ENCODE measurements at regions of chr1 and their contacts with region 1.

Region 1: DNA sequence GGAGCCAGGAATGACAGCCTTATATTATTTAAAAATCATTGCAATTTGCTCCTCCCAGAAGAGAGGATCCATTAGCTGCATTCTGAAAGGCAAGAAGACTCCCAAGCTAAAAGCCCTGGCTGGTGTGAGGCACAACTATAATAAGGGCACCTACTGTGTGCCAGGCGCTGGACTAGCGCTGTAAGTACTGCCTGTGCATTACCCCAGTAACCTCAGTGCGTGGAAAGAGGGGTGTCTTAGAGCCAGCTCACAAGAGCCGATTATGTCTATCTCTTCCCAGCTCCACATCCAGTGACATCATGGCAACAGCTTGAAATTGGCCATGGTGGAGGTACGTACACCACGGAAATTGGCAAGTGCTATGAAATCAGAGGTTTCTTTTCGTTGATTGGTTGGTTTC is 141.7 kb upstream of the IRF2BP2 start:
- DNase-seq: no peak
- ATAC-seq: no peak
- H3K4me3 Mint-ChIP-seq: no peak overlapping the region
- H3K27ac Mint-ChIP-seq: no peak overlapping the region
- H3K4me1 Mint-ChIP-seq: peaks cover 1% of the 10 kb centered on the region
- H3K27me3 Mint-ChIP-seq: no peaks in the 10 kb centered on the region

Region 2: GRCh38 chr1:234699795-234700665 is 51.6 kb before region 1 on chr1:
- CTCF ChIA-PET with region 1: no interaction called
- POLR2A ChIA-PET with region 1: no interaction called
- intact Hi-C with region 1: no loop called
- DNase-seq: peak; percentile 48
- ATAC-seq: peak; percentile 91
- H3K4me3 Mint-ChIP-seq: no peak overlapping the region
- H3K27ac Mint-ChIP-seq: no peak overlapping the region
- H3K4me1 Mint-ChIP-seq: peaks cover 6% of the 10 kb centered on the region
- H3K27me3 Mint-ChIP-seq: no peaks in the 10 kb centered on the region

Region 3: DNA sequence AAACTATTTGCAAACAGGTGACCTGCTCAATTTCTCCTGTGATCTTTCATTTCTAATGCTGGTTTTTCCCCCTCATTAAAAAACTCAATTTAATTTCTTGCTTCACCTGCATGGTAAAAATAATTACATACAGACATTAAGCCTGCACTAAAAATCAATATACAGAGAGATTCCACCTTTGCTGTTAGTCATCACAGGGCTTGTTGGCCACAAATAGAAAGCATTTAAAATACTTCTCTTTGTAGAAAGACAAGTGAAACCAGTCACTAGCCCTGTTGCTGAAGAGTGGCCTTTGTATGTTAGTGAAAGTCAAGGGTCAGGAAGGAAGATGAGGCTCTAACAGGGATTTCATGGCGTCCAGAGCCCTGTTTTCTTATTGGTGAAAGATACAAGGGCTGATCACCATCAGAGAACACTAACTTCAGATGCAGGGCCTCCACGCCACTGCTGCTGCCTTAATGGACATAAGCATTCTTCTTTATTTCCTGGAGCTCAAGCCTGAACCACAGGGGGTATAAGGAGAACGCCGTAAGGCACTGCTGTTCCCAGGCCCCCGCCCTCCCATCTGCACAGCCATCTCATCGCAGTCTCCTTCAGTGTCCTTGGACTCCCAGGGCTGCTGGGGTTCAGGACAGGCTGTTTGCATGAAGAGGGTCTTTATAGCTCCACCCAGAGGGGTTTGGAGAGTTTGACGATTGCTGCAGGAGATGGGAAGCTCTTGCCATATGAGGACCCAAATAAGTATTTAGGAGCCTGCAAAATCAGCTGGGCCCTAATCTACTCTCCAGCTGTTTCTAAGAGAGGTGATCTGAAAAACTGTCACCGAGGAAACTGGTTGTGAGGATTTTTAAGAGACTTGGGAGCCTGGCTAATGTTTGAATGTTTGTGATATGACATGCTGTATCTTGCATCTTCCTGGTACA is 24.4 kb before region 1 on chr1:
- CTCF ChIA-PET with region 1: no interaction called
- POLR2A ChIA-PET with region 1: no interaction called
- intact Hi-C with region 1: no loop called
- DNase-seq: no peak
- ATAC-seq: no peak
- H3K4me3 Mint-ChIP-seq: peak overlapping the region; percentile 12
- H3K27ac Mint-ChIP-seq: peak overlapping the region; percentile 33
- H3K4me1 Mint-ChIP-seq: peaks cover 91% of the 10 kb centered on the region
- H3K27me3 Mint-ChIP-seq: no peaks in the 10 kb centered on the region

Region 4: DNA sequence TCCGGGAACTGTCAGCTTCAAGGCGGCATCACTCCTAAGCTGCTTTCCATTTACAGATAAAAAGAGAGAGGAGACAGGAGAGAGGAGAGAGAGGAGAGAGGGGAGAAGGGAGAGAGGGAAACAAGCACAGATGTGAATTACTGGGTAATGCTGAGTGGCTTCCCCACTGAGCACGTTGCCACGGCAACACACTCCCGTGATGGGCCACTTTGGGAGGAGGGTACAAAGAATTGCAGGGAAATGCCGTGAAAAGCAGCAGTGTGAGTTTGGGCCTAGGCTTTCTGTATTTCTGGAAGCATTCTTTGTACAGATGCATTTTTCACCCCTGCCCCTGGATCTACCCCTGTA is 13.7 kb before region 1 on chr1:
- CTCF ChIA-PET with region 1: interaction called, 6 read pairs
- POLR2A ChIA-PET with region 1: no interaction called
- intact Hi-C with region 1: loop called in 1 of 2 experiments (anchors 2 kb)
- DNase-seq: no peak
- ATAC-seq: no peak
- H3K4me3 Mint-ChIP-seq: no peak overlapping the region
- H3K27ac Mint-ChIP-seq: no peak overlapping the region
- H3K4me1 Mint-ChIP-seq: peaks cover 9% of the 10 kb centered on the region
- H3K27me3 Mint-ChIP-seq: no peaks in the 10 kb centered on the region

Region 5: GRCh38 chr1:234970731-234971476 is 219.2 kb after region 1 on chr1:
- CTCF ChIA-PET with region 1: no interaction called
- POLR2A ChIA-PET with region 1: no interaction called
- intact Hi-C with region 1: no loop called
- DNase-seq: peak; percentile 47
- ATAC-seq: peak; percentile 40
- H3K4me3 Mint-ChIP-seq: no peak overlapping the region
- H3K27ac Mint-ChIP-seq: peak overlapping the region; percentile 85
- H3K4me1 Mint-ChIP-seq: peaks cover 69% of the 10 kb centered on the region
- H3K27me3 Mint-ChIP-seq: no peaks in the 10 kb centered on the region